ENCODE measurements at regions of chr4 and their contacts with region 1.

Region 1: GRCh38 chr4:139530833-139531427 is 25.1 kb downstream of the SETD7 start:
- DNase-seq: no peak
- ATAC-seq: peak; percentile 85
- H3K4me3 ChIP-seq: no peak overlapping the region
- H3K27ac ChIP-seq: no peak overlapping the region
- H3K4me1 ChIP-seq: peaks cover 4% of the 10 kb centered on the region; the same call in 1 of the 2 replicates
- H3K27me3 ChIP-seq: no peaks in the 10 kb centered on the region
- CTCF ChIP-seq: peak; percentile 75 to 87 (median 76)
- EP300 ChIP-seq: no peak
- POLR2A ChIP-seq: no peak
- RAD21 ChIP-seq: peak; percentile 81

Region 2: DNA sequence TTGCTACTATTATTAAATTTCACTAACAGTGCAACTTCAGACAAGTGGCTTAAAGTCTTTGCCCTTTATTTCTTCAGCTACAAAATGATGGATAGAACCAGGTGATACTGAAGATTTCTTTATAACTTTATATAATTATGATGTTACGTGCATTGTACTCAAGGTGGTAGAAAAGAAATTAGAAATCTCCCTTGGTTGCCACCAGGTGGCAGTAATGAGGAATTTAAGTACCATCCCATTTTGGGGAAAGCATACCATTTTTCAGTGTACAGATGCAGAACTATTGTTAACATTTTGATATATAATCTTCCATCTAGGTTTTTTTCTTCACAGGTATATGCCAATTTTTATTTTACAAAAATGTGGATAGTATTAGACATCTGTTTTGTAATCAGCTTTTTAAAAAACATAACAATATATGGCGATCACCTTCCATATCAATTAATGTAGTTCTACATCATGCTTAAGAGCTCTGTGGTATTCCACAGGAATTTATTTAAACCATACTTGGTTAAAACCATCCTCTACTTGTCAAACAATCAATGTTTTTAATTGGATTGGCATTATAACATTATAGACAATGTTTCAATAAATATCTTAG is 114.8 kb before region 1 on chr4:
- CTCF ChIA-PET with region 1: interaction called, 6 read pairs
- POLR2A ChIA-PET with region 1: no interaction called
- RAD21 ChIA-PET with region 1: interaction called, 4 read pairs
- SMC1A ChIA-PET with region 1: interaction called, 4 read pairs
- in situ Hi-C with region 1: loop called (anchors 5 kb)
- intact Hi-C with region 1: loop called (anchors 1 kb)
- DNase-seq: no peak
- ATAC-seq: peak; percentile 68
- H3K4me3 ChIP-seq: no peak overlapping the region
- H3K27ac ChIP-seq: no peak overlapping the region
- H3K4me1 ChIP-seq: no peaks in the 10 kb centered on the region
- H3K27me3 ChIP-seq: no peaks in the 10 kb centered on the region
- CTCF ChIP-seq: peak; percentile 44 to 54 (median 53); a peak in 5 of 6 replicates
- EP300 ChIP-seq: no peak
- POLR2A ChIP-seq: no peak
- RAD21 ChIP-seq: peak; percentile 57

Region 3: GRCh38 chr4:139453371-139454110 is 77.4 kb before region 1 on chr4:
- CTCF ChIA-PET with region 1: interaction called, 20 read pairs
- POLR2A ChIA-PET with region 1: no interaction called
- RAD21 ChIA-PET with region 1: interaction called, 3 read pairs
- SMC1A ChIA-PET with region 1: interaction called, 3 read pairs
- in situ Hi-C with region 1: no loop called
- intact Hi-C with region 1: loop called (anchors 2 kb)
- DNase-seq: peak; percentile 90
- ATAC-seq: peak; percentile 91
- H3K4me3 ChIP-seq: peak overlapping the region; percentile 82
- H3K27ac ChIP-seq: peak overlapping the region; percentile 78
- H3K4me1 ChIP-seq: peaks cover 12% of the 10 kb centered on the region
- H3K27me3 ChIP-seq: no peaks in the 10 kb centered on the region
- CTCF ChIP-seq: peak in 1 of 3 experiments; percentile 0; a peak in 1 of 6 replicates
- EP300 ChIP-seq: no peak; a peak in 1 of 4 replicates
- POLR2A ChIP-seq: peak; percentile 91
- RAD21 ChIP-seq: no peak

Region 4: DNA sequence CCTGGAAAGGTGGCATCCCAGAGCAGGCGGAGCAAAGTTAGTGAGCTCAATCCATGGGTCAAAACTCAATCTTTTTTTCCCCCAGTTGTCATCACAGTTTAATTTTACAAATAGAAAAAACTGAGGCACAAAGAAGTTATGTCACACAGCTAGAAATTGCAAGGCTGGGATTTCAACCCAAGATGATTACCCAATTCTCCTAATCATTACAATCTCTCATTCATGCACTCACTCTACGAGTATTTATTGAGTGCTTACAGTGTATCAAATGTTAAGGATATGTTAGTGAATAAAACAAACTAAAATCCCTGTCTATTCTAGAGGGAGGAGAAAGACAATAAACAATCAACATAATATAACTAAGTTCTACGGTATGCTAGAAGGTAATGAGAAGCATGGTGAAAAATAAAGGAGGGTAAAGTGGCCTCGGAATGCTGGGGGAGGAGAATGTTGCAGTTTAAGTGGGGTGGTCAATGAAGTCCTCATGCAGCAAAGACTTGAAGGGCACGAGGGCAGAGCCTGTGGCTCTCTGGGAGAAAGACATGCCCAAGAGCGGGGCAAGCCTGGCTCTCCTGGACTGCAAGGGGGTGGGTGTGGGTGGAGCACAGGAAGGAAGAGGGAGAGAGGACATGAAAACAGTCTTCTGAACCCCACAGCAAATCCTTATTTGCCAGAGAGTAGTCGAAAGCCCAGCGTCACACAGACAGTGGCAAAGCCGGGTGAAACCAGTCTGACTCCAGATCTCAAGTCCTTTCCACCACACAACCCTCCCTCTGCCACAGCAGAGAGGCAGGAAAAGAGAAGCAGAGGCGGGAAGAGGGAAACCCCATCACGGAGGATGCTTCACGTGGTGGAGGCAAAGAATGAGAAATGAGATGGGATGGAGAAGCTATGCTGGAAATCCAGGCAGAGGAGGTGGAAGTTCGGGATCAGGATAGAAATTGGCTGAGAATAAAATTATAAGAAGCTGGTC is 28.7 kb before region 1 on chr4:
- CTCF ChIA-PET with region 1: interaction called, 22 read pairs
- POLR2A ChIA-PET with region 1: no interaction called
- RAD21 ChIA-PET with region 1: interaction called, 4 read pairs
- SMC1A ChIA-PET with region 1: interaction called, 7 read pairs
- in situ Hi-C with region 1: no loop called
- intact Hi-C with region 1: loop called (anchors 1 kb)
- DNase-seq: no peak
- ATAC-seq: no peak
- H3K4me3 ChIP-seq: no peak overlapping the region
- H3K27ac ChIP-seq: no peak overlapping the region
- H3K4me1 ChIP-seq: no peaks in the 10 kb centered on the region
- H3K27me3 ChIP-seq: no peaks in the 10 kb centered on the region
- CTCF ChIP-seq: no peak
- EP300 ChIP-seq: no peak
- POLR2A ChIP-seq: no peak
- RAD21 ChIP-seq: no peak

Region 5: DNA sequence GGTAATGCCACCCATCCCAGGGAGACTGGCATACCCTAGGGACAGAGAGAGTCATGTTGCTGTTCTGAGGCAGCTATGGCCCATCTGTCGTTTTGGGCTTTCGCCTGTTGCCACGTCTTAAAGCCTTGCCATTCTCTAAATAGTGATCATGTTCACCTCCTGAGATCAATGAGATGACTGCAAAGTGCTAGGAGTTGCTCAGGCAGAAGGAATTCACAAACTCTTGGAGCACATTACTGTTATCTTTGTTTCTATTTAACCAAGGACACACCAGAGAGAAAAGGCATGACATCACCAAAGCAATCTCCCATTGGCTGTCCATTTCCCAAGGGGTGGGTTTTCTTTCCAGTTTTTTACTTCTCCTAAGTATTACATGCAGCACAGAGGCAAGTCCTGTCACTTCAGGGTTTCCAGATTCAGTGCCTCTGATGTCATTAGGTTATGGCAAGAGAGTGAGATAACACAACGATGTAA is 62.2 kb after region 1 on chr4:
- CTCF ChIA-PET with region 1: no interaction called
- POLR2A ChIA-PET with region 1: no interaction called
- RAD21 ChIA-PET with region 1: no interaction called
- SMC1A ChIA-PET with region 1: no interaction called
- in situ Hi-C with region 1: no loop called
- intact Hi-C with region 1: no loop called
- DNase-seq: no peak
- ATAC-seq: no peak
- H3K4me3 ChIP-seq: no peak overlapping the region
- H3K27ac ChIP-seq: no peak overlapping the region
- H3K4me1 ChIP-seq: no peaks in the 10 kb centered on the region
- H3K27me3 ChIP-seq: peaks cover 0 to 2% of the 10 kb centered on the region in 2 experiments; a peak in 2 of 4 replicates
- CTCF ChIP-seq: no peak
- EP300 ChIP-seq: no peak
- POLR2A ChIP-seq: no peak
- RAD21 ChIP-seq: no peak